Panc1 (cell line): ENCODE measurements at regions of chr19 and their contacts with region 1.

Region 1: GRCh38 chr19:39941615-39942365 is 7.4 kb upstream of the FCGBP start:
- DNase-seq: no peak
- ATAC-seq: no peak
- H3K4me3 ChIP-seq: no peak overlapping the region
- H3K27ac ChIP-seq: no peak overlapping the region
- H3K4me1 ChIP-seq: peaks cover 8% of the 10 kb centered on the region
- H3K27me3 ChIP-seq: peaks cover 34% of the 10 kb centered on the region
- CTCF ChIP-seq: no peak

Region 2: GRCh38 chr19:38975214-38975860 is 966.5 kb before region 1 on chr19 and contains the start of gene FBXO17:
- CTCF ChIA-PET with region 1: no interaction called
- POLR2A ChIA-PET with region 1: no interaction called
- in situ Hi-C with region 1: loop called (anchors 25 kb)
- intact Hi-C with region 1: no loop called
- DNase-seq: peak; percentile 81
- ATAC-seq: peak; percentile 89
- H3K4me3 ChIP-seq: peak within 1 kb of the TSS; percentile 50 to 59
- H3K27ac ChIP-seq: peak within 1 kb of the TSS; percentile 97
- H3K4me1 ChIP-seq: peaks cover 48% of the 10 kb centered on the region
- H3K27me3 ChIP-seq: no peaks in the 10 kb centered on the region
- CTCF ChIP-seq: no peak
- total RNA-seq, gene FBXO17: 411 TPM

Region 3: GRCh38 chr19:39778763-39779162 is 163.0 kb before region 1 on chr19 and contains the start of gene LEUTX:
- CTCF ChIA-PET with region 1: no interaction called
- POLR2A ChIA-PET with region 1: no interaction called
- in situ Hi-C with region 1: loop called (anchors 5 kb)
- intact Hi-C with region 1: no loop called
- DNase-seq: no peak
- ATAC-seq: no peak
- H3K4me3 ChIP-seq: no peak within 1 kb of the TSS
- H3K27ac ChIP-seq: no peak within 1 kb of the TSS
- H3K4me1 ChIP-seq: no peaks in the 10 kb centered on the region
- H3K27me3 ChIP-seq: peaks cover 86% of the 10 kb centered on the region
- CTCF ChIP-seq: no peak
- total RNA-seq, gene LEUTX: not detected

Region 4: DNA sequence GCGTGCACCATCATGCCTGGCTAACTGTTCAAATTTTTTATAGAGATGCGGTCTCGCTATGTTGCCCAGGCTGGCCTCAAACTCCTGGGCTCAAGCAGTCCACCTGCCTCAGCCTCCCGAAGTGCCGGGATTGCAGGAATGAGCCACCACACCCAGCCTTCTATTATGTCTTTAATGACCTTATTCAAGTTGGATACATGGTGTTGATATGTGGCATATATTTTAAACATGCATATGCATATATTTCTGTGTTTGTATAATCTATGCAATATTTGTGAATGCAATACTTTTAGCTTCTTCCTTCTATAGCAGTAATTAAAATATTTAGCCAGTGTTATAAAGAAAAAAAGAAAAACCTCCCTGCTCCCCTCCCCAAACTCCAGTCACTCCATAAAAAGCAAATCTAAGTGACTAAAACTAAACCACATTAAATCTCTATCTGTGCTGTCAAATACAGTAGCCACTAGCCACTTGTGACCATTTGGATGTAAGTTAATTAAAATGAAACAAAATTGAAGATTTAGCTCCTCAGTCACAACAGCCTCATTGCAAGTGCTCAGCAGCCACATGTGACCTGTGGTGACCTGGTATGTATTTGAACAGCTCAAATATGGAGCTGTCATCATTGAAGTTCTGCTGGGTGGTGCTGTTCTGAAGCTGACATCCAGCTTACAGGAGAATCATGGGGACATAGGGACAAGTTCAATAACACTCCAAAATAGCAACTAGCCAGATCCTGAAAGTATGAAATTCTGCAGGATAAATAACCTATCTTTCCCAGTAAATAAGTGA is 34.8 kb before region 1 on chr19:
- CTCF ChIA-PET with region 1: interaction called, 17 read pairs
- POLR2A ChIA-PET with region 1: interaction called, 8 read pairs
- in situ Hi-C with region 1: no loop called
- intact Hi-C with region 1: no loop called
- DNase-seq: no peak
- ATAC-seq: no peak
- H3K4me3 ChIP-seq: no peak overlapping the region
- H3K27ac ChIP-seq: no peak overlapping the region
- H3K4me1 ChIP-seq: no peaks in the 10 kb centered on the region
- H3K27me3 ChIP-seq: peaks cover 3% of the 10 kb centered on the region; the same call in 1 of the 2 replicates
- CTCF ChIP-seq: no peak

Region 5: DNA sequence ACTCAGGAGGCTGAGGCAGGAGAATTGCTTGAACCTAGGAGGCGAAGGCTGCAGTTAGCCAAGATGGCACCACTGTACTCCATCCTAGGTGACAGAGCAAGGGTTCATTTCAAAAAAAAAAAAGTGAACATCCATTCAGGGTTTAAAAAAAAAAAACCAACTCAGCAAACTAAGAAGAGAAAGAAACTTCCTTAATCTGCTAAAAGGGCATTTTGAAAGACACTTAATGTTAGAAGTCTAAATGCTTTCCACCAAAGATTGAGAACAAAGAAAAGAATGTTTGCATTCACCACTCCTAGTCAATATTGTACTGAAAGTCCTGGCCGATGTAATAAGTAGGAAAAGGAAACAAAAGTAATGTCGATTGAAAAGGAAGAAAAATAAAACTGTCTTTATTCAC is 22.1 kb after region 1 on chr19:
- CTCF ChIA-PET with region 1: no interaction called
- POLR2A ChIA-PET with region 1: interaction called, 11 read pairs
- in situ Hi-C with region 1: no loop called
- intact Hi-C with region 1: no loop called
- DNase-seq: no peak
- ATAC-seq: no peak
- H3K4me3 ChIP-seq: no peak overlapping the region
- H3K27ac ChIP-seq: no peak overlapping the region
- H3K4me1 ChIP-seq: no peaks in the 10 kb centered on the region
- H3K27me3 ChIP-seq: no peaks in the 10 kb centered on the region
- CTCF ChIP-seq: no peak

Region 6: GRCh38 chr19:40035996-40036395 is 94.2 kb after region 1 on chr19:
- CTCF ChIA-PET with region 1: no interaction called
- POLR2A ChIA-PET with region 1: no interaction called
- in situ Hi-C with region 1: loop called (anchors 5 kb)
- intact Hi-C with region 1: no loop called
- DNase-seq: no peak
- ATAC-seq: no peak
- H3K4me3 ChIP-seq: no peak overlapping the region
- H3K27ac ChIP-seq: no peak overlapping the region
- H3K4me1 ChIP-seq: no peaks in the 10 kb centered on the region
- H3K27me3 ChIP-seq: no peaks in the 10 kb centered on the region
- CTCF ChIP-seq: peak; percentile 19; the same call in 1 of the 2 replicates

Region 7: GRCh38 chr19:40174092-40174491 is 232.3 kb after region 1 on chr19:
- CTCF ChIA-PET with region 1: no interaction called
- POLR2A ChIA-PET with region 1: no interaction called
- in situ Hi-C with region 1: no loop called
- intact Hi-C with region 1: no loop called
- DNase-seq: no peak
- ATAC-seq: no peak
- H3K4me3 ChIP-seq: no peak overlapping the region
- H3K27ac ChIP-seq: no peak overlapping the region
- H3K4me1 ChIP-seq: no peaks in the 10 kb centered on the region
- H3K27me3 ChIP-seq: 0 out of 2 replicates have a peak, but pooled peaks cover 2% of the 10 kb centered on the region
- CTCF ChIP-seq: no peak

Region 8: GRCh38 chr19:40331069-40331468 is 389.3 kb after region 1 on chr19:
- CTCF ChIA-PET with region 1: no interaction called
- POLR2A ChIA-PET with region 1: interaction called, 15 read pairs
- in situ Hi-C with region 1: no loop called
- intact Hi-C with region 1: no loop called
- DNase-seq: no peak
- ATAC-seq: no peak
- H3K4me3 ChIP-seq: no peak overlapping the region
- H3K27ac ChIP-seq: no peak overlapping the region
- H3K4me1 ChIP-seq: no peaks in the 10 kb centered on the region
- H3K27me3 ChIP-seq: no peaks in the 10 kb centered on the region
- CTCF ChIP-seq: no peak